ENCODE measurements at regions of chr15 and their contacts with region 1.

Region 1: DNA sequence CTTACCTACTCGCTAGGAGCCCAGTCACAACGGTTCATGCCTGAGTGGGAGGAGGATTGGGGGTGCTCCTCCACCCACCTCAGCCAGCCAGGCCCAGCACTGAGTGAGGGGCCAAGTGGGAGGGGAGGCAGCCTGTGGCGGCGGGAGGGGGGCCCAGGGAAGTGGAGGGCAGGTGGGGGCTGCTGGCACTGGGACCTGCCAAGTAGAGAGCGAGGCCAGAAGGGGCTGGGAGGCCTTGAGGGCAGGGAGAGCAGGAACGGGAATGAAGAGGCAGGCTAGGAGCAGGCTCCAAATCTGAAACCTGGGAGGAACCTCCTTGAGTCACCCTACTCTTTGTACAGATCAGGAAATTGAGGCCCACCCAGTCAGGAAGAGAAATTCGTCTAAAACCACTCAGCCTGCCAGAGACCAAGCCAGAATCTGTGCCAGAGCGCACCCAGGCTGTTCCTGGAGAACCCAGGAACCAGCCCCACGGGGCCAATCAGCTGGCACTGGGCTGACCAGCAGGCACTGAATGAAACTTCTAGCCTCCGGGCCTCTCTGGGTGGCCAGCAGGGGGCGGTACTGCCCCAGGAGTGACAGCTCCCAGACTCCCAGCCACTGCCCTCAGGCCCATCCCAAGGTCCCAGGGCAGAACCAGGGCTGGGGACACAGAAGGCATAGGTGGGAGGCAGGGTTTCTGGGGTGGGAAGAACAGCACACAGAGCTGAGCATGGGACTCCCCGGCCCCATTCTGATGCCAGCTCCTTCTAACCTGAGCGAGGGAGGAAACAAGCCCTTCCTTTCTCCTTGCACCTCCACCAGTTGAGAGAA is 14.8 kb upstream of the CYP11A1 start:
- DNase-seq: no peak
- H3K4me3 ChIP-seq: no peak overlapping the region
- CTCF ChIP-seq: peak; percentile 98

Region 2: DNA sequence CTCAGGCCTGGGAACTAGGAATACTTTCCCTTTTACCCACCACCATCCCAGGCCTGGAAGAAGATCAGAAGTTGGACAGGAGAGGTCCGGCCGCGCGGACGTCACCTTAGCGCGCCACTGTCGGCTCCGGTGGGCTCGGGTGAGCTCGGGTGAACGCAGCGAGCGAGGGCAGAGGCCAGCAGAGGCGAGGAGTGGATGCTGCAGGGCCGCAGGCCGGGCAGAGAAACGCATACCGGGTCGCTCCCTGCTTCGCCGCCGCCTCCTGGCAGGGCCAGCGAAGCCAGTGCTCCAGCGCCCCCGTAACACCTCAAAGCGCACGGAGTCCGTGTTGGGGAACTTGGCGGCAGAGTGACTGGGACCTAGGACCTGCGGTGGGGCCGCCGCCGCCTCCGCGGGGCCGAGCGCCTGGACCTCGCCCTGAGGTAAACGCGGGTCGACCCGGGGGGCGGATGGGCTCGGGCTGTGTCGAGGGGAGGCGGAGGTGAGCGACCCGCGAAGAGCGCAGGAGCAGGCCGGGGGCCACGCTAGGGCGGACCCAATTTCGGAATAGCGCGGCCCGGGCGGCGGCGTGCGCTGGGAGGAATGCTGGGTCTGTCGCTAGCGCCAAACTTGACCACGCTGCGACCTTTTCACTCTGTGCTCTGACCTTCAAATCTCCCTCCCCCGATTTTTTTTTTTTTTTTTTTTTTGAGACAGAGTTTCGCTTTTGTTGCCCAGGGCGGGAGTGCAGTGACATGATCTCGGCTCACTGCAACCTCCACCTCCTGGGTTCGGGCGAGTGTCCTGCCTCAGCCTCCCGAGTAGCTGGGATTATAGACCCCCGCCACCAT is 16.4 kb before region 1 on chr15:
- CTCF ChIA-PET with region 1: interaction called, 10 read pairs
- POLR2A ChIA-PET with region 1: no interaction called
- DNase-seq: no peak
- H3K4me3 ChIP-seq: peak overlapping the region; percentile 59
- CTCF ChIP-seq: no peak

Region 3: GRCh38 chr15:74407055-74407691 is 25.0 kb after region 1 on chr15:
- CTCF ChIA-PET with region 1: interaction called, 29 read pairs
- POLR2A ChIA-PET with region 1: interaction called, 6 read pairs
- DNase-seq: peak; percentile 73
- H3K4me3 ChIP-seq: peak overlapping the region; percentile 33
- CTCF ChIP-seq: peak; percentile 18

Region 4: DNA sequence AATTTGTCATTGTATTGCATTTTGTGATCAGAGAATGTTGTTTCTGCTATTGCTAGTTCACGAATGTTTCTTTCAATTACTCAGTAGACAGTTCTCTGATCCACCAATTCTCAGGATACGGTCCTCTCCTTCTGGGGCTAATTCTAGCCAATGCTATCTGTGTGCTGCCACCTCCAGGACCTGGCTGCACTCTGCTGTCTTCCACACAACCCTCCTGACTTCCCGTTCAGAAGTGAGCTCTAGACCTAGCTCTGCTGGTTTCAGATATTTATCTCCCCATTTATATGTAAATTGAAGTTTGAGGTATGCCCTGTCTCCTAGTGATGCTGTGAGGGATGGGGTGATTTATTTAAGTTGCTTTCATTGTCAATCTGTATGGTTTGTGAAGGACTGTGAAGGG is 100.5 kb after region 1 on chr15:
- CTCF ChIA-PET with region 1: interaction called, 161 read pairs
- POLR2A ChIA-PET with region 1: no interaction called
- DNase-seq: no peak
- H3K4me3 ChIP-seq: no peak overlapping the region
- CTCF ChIP-seq: peak; percentile 10

Region 5: DNA sequence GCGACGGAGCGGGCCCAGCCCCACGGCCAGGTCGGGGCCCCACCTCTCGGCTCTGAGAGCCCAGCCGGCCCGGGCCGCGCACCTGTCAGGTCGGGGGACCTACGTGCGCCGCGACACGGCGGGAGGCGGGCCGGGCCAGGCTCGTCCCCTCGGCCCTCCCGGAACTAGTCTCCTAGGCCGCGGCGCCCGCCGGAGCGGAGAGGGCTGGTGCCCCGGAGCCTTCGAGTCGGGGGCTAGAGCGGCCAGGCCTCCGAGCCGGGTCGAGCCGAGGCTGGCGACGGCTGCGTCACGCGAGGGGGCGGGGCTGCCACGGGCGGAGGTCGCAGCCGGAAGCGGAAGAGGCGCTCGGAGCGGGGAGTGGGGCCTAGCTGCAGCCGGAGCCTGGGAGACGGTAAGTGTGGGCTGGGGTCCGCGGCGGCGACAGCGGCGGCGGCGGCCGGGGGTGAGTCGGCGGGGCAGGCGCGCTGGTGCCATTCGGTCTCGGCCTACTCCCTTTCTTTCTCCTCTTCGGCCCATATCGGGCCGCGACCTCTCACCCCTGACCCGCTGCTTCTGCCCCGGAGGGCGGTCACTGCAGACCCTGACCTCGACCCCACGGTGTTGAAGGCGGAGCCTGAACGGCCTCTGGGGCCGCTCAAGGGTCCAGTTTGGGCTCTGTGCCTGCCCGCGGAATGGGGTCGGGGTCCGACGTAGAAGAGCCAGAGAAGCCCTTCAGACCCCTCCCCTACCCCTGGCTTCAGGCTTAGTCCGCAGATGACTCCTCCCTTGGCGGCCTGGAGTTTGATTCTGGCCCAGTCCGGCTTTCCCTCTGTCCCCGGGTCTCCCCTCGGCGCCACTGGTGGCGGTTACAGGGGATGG is 233.5 kb after region 1 on chr15 and contains the start of gene CLK3:
- CTCF ChIA-PET with region 1: interaction called, 22 read pairs
- POLR2A ChIA-PET with region 1: interaction called, 3 read pairs
- DNase-seq: peak; percentile 41
- H3K4me3 ChIP-seq: peak within 1 kb of the TSS; percentile 97
- CTCF ChIP-seq: no peak

Measured in AG04449 (cell line).